ENCODE measurements at regions of chr7 and their contacts with region 1.

Region 1: DNA sequence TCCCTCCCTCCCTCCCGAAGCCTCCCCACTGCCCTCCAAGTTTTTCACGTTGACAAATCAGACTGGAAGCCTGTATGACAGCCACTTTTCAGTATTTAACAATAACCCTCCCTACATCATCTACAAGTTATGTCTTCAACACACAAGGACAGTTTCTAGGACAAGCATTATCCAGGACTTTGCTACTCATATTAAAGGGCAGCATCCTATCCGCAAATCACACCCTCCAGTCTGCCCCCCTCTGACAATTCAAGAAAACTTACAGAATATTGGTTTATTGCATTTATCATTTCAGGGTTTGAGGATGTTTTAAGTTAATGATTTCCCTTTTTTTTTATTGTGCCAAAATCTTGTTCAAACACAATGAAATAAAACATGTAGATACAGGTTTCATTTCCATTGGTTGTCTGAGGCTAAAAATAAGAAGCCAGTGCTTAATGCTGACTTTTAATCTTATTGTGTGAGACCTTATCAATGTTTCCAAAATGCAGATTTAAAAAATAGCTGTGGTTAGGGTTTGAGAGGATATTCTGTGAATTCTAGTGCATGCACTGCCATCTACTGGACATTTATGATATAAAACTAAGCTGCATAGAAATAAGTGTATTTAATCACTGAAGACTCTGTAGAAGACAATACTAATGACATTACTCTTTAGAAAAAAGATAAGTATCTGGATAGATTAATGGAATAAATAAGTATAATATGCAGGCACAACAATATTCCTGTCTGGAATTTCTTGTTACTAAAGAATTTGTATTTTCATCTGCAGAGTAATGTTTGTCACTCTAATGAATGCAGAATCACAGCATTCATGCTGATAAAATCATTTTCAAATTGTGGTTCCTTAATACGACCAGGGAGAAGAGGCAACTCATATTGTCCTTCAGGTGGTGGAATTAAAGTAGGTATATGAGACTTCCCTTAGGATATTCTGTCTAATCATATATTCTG is 64.1 kb downstream of the CAV1 start:
- DNase-seq: peak; percentile 29 to 63
- ATAC-seq: peak; percentile 69 to 73; a peak in 4 of 6 replicates
- H3K4me3 ChIP-seq: no peak overlapping the region
- H3K27ac ChIP-seq: peak overlapping the region; percentile 69 to 80
- H3K4me1 ChIP-seq: peaks cover 34% of the 10 kb centered on the region
- CTCF ChIP-seq: peak; percentile 94
- EP300 ChIP-seq: no peak
- POLR2A ChIP-seq: no peak
- RAD21 ChIP-seq: peak; percentile 97 to 98

Region 2: DNA sequence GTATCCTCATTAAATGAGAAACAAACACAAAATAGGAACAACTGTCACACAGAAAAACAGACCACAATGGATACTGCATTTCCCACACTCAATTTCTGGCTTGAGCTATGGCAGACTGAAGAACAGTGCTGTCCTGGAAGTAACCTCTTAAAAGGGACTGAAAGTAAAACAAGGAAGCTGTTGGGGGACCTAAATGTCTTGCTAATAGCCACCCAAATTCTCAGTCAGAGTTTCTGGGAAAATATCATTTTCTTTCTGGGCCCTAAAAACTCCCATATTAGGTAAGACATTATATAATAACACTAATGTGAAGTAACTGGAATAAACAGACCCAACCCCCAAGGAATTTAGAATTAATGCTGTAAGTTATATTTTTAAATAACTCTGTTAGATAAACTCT is 477.4 kb before region 1 on chr7:
- CTCF ChIA-PET with region 1: no interaction called
- POLR2A ChIA-PET with region 1: no interaction called
- DNase-seq: no peak
- ATAC-seq: no peak
- H3K4me3 ChIP-seq: no peak overlapping the region
- H3K27ac ChIP-seq: no peak overlapping the region
- H3K4me1 ChIP-seq: no peaks in the 10 kb centered on the region
- CTCF ChIP-seq: no peak
- EP300 ChIP-seq: no peak
- POLR2A ChIP-seq: no peak
- RAD21 ChIP-seq: no peak

Region 3: DNA sequence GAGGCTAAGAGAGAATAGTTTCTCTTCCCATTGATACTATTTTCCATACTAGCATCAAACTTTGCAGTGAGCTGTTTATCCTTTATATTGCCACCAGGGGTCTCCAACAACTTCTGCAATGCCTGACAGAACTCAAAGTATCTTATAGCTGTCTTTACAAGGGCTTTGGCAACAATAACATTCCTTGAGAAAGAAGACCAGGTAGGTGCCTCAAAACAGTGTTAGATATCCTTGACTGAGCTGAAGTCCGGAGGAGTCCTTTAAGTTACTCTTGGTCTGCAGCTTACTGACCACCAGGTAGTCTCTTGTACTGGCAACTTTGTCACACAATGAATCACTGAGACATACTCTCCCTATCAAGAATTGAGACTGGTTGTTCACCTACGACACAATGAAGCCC is 408.6 kb before region 1 on chr7:
- CTCF ChIA-PET with region 1: interaction called, 20 read pairs
- POLR2A ChIA-PET with region 1: interaction called, 3 read pairs
- DNase-seq: peak; percentile 36 to 62
- ATAC-seq: peak; percentile 84 to 88
- H3K4me3 ChIP-seq: no peak overlapping the region
- H3K27ac ChIP-seq: no peak overlapping the region
- H3K4me1 ChIP-seq: peaks cover 14% of the 10 kb centered on the region
- CTCF ChIP-seq: peak; percentile 91
- EP300 ChIP-seq: no peak
- POLR2A ChIP-seq: no peak
- RAD21 ChIP-seq: peak; percentile 89 to 94

Region 4: DNA sequence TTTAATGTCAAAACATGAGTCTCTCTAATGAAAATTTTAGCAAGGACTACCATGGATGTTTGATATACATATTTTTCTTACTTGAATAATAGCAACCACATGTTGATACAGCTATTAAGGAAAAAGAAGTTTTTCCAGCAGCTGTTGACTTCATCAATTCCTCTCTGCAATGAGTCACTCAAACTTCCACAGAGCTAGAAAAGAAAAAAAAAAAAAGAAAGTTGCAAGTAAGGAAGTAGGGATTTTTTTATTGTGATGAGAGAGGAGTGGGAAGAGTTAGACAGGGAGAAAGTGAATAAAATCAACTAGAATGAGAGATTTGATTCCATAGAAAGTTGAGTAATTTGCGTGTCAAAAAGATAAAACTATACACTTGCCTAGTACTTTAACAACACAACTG is 17.9 kb before region 1 on chr7:
- CTCF ChIA-PET with region 1: interaction called, 10 read pairs
- POLR2A ChIA-PET with region 1: interaction called, 3 read pairs
- DNase-seq: peak in 1 of 2 experiments; percentile 40
- ATAC-seq: peak; percentile 40 to 61; a peak in 4 of 6 replicates
- H3K4me3 ChIP-seq: no peak overlapping the region
- H3K27ac ChIP-seq: peak overlapping the region; percentile 76 to 79
- H3K4me1 ChIP-seq: peaks cover 78% of the 10 kb centered on the region
- CTCF ChIP-seq: no peak
- EP300 ChIP-seq: no peak
- POLR2A ChIP-seq: no peak
- RAD21 ChIP-seq: no peak

Region 5: GRCh38 chr7:116630932-116631745 is 42.2 kb after region 1 on chr7:
- CTCF ChIA-PET with region 1: interaction called, 18 read pairs
- POLR2A ChIA-PET with region 1: interaction called, 3 read pairs
- DNase-seq: peak; percentile 86 to 96
- ATAC-seq: peak; percentile 94 to 97
- H3K4me3 ChIP-seq: no peak overlapping the region
- H3K27ac ChIP-seq: peak overlapping the region; percentile 85 to 90
- H3K4me1 ChIP-seq: peaks cover 55% of the 10 kb centered on the region
- CTCF ChIP-seq: no peak
- EP300 ChIP-seq: no peak
- POLR2A ChIP-seq: no peak
- RAD21 ChIP-seq: no peak

Region 6: GRCh38 chr7:116786791-116787443 is 198.0 kb after region 1 on chr7:
- CTCF ChIA-PET with region 1: interaction called, 10 read pairs
- POLR2A ChIA-PET with region 1: no interaction called
- DNase-seq: peak in 1 of 2 experiments; percentile 59
- ATAC-seq: peak; percentile 82
- H3K4me3 ChIP-seq: no peak overlapping the region
- H3K27ac ChIP-seq: no peak overlapping the region
- H3K4me1 ChIP-seq: peaks cover 23% of the 10 kb centered on the region
- CTCF ChIP-seq: peak; percentile 56
- EP300 ChIP-seq: no peak
- POLR2A ChIP-seq: no peak
- RAD21 ChIP-seq: peak; percentile 73 to 76

Measured in A549 (cell line).